GM10248 (cell line): ENCODE measurements at regions of chr17 and their contacts with region 1.

Region 1: DNA sequence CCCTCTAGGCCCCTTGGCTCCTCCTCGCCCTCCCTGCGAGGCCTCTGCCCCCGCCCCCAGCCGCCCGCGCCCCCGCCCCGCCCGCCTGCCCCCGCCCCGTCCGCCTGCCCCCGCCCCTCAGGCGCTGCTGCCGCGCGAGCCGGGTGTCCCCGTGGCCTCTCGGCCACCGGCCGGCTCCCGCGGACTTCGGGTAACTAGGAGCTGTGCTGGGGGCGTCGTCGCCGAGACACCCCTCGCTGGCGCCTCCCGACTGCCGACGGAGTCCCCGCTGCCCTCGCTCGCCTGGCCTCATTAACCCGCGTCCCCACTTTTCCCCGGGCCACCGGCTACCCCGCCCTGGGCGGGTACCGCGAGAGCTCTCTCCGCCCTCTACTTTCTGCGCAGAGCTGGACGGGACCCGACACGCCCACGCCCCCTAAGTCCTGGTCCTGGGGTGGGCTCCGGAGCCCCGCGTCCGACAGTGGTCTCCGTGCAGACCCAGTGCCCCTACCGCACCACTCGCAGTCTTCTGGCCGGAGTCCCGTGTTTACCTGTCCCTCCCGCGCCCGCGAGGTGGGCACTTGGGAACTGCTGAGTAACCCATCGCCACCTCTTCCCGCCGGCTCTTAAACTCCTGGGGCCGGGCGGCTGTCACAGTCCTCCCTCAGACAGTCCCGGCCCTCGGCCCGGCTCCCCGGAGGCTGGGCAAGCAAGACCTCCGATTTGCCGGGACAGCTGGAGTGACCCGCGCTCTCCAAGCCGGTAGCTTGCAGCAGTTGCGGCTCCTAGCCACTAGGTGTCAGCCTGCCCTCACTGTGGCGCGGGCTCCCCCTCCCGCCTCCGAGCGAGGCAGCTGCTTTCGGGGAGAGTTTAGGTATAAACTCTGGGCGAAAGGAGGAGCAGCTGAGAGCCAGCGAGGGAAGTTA is at the start of gene TLCD1:
- DNase-seq: peak; percentile 82
- CTCF ChIP-seq: peak; percentile 97

Region 2: GRCh38 chr17:28540231-28540630 is 186.2 kb before region 1 on chr17:
- CTCF ChIA-PET with region 1: no interaction called
- POLR2A ChIA-PET with region 1: no interaction called
- DNase-seq: no peak
- CTCF ChIP-seq: no peak

Region 3: DNA sequence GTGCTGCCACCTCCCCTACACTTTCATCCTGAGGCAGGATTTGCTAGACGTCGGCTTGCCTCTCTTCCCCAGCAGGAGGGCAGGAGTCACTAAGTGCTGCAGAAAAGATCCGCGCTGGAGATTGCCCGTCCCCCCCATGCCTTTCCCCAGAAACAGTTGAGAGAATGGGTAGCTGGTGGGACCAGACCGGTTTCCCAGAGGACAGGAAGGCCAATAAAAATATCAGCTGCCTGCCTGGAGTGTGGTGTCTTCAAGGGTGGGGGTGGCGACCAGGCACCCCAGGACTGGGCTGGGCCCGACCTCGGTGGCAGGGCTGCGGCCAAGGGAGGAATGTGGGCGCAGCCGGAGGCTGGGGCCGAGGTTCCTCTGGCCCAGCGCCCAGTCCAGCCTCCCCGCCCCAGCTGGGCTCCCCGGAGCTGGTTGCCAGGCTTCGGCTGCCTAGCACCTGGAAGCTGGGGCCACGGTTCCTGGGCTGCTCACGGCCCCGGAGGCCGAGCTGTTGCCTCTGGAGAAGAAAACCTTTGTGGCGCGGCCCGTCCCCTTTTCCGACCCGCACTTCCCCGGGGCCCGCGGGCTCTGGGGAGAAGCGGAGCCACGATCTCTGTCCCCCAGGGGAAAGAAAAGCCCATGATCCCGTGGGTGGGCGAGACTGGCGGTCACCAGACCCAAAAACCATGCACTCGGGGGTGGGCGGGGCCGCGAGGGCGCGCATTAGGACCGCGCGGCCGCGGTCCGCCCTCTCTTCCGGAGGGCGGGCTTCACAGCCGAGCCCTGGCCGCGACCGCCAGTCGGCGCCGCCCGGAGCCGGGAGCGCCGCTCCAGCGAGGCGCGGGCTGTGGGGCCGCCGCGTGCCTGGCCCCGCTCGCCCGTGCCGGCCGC is 17.0 kb after region 1 on chr17 and contains the start of gene TRAF4:
- CTCF ChIA-PET with region 1: interaction called, 472 read pairs
- POLR2A ChIA-PET with region 1: interaction called, 90 read pairs
- DNase-seq: peak; percentile 89
- CTCF ChIP-seq: no peak

Region 4: GRCh38 chr17:28812091-28812747 is 85.7 kb after region 1 on chr17:
- CTCF ChIA-PET with region 1: interaction called, 11 read pairs
- POLR2A ChIA-PET with region 1: no interaction called
- DNase-seq: peak; percentile 99
- CTCF ChIP-seq: no peak

Region 5: GRCh38 chr17:28828294-28829040 is 102.0 kb after region 1 on chr17:
- CTCF ChIA-PET with region 1: no interaction called
- POLR2A ChIA-PET with region 1: no interaction called
- DNase-seq: no peak
- CTCF ChIP-seq: no peak

Region 6: GRCh38 chr17:28902819-28903545 is 176.5 kb after region 1 on chr17 and contains the start of gene DHRS13:
- CTCF ChIA-PET with region 1: interaction called, 37 read pairs
- POLR2A ChIA-PET with region 1: no interaction called
- DNase-seq: peak; percentile 93
- CTCF ChIP-seq: peak; percentile 92

Region 7: DNA sequence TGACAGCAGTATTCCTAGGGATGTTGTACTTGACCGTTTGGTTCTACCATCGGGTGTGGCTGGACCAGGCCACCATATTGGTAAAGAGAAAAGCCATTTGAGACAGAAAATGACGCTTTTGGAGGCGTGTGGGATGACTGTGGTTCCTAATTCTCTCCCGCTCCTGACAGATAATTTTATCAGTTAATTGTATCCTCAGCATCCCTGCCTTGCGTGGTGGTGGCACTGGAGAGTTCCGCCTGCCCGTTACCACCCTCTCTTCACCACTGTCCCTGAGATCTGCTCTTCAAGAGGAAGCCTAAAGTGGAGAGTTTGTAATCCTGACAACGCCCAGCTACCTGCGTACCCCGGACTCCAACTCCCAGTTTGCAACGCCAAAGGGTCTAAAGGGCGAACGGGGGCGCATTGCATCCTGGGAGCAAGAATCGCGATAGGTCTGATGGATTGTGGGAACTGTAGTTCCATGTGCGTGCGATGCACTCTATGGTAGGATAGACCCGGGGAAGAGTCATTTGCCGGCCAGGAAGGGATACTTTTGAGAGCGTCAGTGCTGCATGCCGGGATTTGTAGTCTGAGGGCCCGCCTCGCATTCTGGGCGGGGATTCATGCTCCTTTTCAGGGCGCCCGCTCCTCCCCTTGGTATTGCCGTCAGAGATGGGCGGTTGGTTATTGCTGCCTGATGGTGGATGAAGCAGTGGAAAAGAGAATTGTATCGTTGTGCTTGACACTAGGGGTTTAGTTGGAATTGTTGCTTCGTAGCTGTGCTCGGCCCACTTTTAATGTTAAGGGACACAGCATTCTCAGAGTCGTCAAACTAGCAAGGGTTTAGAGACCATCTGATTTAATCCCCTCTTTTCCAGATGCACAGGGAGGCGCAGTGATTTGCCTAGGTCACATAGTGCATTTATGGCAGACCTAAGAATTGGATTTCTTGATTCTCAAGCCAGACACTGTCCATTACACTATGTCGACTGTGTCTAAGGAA is 225.8 kb after region 1 on chr17:
- CTCF ChIA-PET with region 1: interaction called, 39 read pairs
- POLR2A ChIA-PET with region 1: interaction called, 20 read pairs
- DNase-seq: peak; percentile 92
- CTCF ChIP-seq: no peak

Region 8: DNA sequence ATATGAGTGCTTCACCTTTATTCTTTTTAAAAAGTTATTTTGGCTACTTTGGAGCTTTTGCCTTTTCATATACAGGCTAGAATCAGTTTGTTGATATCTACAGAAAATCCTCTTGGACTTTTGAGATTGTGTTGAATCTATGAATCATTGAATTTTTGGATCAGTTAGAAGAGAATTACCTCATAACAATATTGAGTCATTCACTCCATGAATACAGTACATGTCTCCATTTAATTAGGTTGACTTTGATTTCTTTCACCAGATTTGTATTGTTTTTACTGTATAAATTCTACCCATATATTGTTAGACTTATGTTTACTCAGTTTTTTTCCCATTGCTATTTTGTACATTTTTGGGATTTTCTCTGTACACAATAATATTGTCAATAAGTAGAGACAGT is 718.1 kb after region 1 on chr17:
- CTCF ChIA-PET with region 1: no interaction called
- POLR2A ChIA-PET with region 1: no interaction called
- DNase-seq: no peak
- CTCF ChIP-seq: no peak

Region 9: DNA sequence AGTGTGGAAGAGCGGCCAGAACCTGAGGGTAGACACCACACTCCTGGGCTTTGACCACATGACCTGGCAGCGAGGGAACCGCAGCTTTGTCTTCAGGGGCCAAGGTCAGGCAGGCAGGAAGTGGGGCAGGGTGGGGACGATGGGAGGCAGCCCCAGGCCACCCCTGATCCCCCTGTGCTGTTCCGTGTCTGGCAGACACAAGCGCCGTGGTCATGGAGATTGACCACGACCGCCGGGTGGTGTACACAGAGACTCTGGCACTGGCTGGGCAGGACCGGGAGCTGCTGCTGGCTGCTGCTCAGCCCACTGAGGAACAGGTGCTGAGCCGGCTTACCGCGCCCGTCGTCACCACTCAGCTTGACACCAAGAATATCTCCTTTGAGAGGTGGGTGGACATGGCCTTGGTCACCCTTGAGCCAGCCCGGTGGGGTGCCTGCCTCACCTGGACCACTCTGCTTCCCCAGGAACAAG is 882.4 kb after region 1 on chr17:
- CTCF ChIA-PET with region 1: no interaction called
- POLR2A ChIA-PET with region 1: interaction called, 11 read pairs
- DNase-seq: no peak
- CTCF ChIP-seq: no peak